ENCODE measurements at regions of chr15 and their contacts with region 1.

Region 1: DNA sequence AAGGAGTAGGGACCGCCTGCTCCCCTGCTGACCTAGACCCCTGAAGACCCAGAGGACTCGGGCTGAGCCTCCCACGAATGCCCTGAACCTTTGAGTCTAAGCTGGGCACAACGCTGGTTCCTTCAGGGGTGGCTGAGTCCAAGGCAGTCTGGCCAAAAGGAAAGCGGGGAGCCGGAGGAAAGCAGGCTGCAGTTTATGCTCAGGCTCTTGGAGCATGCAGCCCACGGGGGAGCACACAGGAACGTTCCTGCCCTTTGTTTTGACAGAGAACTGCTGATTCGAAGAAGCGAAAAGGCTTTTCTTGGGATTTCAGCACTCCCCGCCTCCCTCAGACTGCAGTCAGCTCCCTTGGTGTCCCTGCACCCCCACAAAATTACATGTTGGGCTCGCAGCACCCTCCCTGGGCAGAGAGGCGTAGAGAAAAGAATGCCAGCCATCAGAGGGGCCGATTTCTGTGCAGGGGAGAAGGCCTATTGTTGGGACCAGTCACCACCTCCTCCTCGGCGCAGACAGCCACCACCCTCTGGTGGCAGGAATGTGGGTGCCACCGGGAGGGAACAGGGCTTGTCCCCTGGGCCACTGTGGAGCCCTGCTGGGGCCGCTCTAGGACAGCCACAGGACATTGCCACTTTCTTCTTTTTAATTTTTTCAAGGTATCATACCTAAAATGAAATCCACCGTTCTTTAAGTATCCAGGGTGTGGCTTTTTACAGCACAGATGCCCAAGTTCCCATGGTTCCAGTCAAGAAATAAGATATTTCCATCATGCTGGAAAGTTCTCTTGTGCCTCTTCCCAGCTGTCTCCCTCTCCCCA is 72.2 kb downstream of the SMAD6 start:
- DNase-seq: peak; percentile 91

Region 2: DNA sequence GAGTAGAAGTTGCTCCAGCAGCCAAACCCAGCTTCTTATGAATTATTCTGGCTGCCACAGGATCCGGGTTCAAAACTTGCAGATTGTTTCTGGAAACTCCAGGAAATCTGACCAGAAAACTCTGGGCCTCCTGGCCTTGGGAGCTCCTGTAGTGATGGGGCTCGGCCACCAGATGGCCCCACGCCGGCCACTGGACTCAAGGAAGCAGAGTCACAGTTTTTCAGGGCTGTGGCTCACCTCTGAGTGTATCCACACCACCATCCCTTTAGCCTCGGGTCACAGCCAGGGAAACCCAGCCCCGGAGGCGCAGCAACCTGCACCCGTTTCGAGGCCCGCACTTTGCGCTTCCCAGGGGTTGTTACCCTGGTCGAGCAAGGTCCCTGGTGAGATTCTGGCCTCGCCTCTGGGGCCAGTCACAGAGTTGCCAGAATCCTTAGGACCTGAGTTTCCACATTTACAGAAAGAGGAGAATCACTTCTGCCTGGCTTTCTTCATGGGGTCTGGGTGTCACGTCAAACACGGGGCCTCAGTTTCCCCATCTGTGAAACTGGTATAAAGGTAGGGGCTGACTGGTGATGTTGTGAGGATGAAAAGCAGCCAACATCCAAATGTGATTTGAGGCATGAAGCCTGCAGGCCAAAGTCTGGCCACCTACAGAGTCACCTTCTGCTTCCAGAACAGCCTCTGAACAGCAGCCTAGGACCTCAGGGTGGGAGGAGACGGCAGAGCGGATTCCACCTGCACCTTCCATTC is 154.9 kb before region 1 on chr15:
- intact Hi-C with region 1: loop called in 1 of 2 experiments (anchors 5 kb)
- DNase-seq: peak; percentile 93

Region 3: GRCh38 chr15:66707310-66708082 is 66.7 kb before region 1 on chr15:
- intact Hi-C with region 1: loop called in 1 of 2 experiments (anchors 5 kb)
- DNase-seq: no peak

Region 4: DNA sequence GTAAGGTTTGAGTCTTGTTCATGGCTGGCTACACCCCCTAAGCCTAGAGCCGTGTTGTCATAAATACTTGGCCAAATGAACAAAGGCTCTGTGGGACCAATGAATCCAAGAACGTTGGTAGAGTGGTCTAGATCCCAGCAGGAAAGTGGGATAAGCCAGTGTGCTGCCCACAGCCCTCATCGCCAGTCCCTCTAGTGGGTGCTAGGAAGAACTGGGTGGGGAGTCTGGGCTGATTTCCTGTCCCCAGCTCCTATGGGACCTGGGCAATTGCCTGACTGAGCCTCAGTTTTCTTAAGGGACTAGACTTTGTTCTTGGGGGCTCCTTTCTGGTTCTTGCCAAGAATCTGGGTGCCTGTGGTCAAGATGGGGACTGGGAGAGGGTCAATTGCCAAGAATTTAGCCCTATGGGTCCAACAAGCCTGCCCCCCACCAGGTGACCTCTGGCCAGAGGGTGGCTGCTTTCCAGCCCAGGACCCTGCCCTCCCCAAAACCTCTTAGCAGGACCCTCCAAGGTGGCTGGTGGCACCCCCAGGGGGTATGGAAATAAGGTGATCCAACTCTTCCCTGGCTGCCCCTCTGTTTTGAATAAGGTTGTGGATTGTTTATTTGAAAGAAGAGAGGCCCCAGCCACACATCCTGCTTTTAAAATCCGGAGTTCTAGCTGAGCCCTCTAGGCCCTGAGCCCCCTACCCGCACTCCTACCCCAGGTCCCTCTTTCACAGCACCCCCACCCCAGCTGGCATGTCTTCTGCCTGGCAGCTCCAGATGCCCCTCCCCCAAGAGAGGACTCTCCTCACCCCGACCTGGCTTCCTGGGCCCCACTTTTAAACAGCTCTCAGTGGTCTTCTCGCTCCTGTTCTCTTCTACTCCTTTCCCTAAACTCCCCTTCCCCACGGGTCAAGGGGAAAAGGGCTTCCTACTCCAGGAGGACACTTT is 29.3 kb before region 1 on chr15:
- intact Hi-C with region 1: no loop called
- DNase-seq: no peak

Region 5: DNA sequence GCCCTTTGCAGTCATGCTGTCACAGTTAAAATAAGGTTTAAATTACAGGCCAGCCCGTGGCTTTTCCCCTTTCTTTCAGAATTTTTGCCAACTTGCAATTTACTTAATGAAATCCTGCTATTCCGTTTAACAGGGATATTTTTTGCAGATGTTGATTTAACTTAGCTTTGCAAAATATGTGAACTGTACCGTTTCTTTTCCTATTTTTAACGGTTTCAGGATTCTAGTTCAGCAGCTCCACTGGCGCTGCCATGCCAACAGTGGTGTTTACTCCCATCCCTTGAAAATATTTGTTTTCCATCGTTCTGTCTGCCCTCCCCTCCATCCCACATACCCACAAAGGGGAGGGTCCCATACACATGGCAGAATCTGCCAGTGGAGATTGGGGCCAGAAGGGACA is 17.9 kb before region 1 on chr15:
- intact Hi-C with region 1: loop called in 1 of 2 experiments (anchors 1 kb)
- DNase-seq: peak; percentile 35

Region 6: GRCh38 chr15:66851226-66852071 is 77.2 kb after region 1 on chr15:
- intact Hi-C with region 1: loop called (anchors 5 kb)
- DNase-seq: peak; percentile 96

Measured in posterior vena cava (tissue), 2 donors.